Heart right ventricle (tissue), 16 donors: ENCODE measurements at regions of chr10 and their contacts with region 1.

Region 1: DNA sequence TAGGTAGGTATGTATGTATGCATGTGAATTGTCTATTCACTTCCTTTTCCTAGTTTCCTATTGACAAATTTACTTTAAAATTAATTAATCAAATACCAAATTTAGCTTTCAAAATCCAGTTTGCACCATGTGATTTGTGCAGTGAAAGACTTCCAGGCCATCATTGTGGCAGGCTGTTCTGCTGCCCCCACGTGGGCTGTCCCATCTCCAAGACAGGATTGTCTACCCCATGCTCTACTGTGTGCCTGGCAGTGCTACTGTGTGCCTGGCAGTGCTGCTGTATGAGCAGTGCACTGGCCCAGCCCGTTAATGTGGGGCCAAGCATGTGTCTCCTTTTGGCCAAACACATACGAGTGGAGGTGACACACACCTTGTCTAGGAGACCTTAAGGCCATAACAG is 374.8 kb downstream of the GFRA1 start:
- DNase-seq: no peak
- ATAC-seq: no peak
- H3K4me3 ChIP-seq: no peak overlapping the region
- H3K27ac ChIP-seq: no peak overlapping the region
- H3K4me1 ChIP-seq: no peaks in the 10 kb centered on the region
- H3K27me3 ChIP-seq: no peaks in the 10 kb centered on the region
- CTCF ChIP-seq: no peak

Region 2: DNA sequence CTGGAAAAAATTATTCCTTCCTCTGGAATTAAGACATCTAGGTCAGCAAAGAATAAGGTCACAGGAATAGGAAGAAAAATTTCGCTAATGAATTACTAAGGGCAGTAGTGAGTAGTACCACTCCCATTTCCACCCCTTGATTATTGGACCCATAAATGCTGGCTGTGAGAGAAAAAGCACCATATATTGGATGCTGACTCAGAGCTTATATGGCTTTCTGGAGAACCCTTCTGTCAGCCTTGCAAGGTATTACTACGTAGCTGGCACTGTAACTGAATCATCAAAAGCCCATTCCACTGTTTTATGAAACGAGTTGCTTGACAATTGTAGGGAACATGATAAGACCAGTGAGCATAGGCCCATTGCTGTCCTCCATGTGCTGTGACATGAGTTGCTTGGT is 625.8 kb before region 1 on chr10:
- intact Hi-C with region 1: no loop called
- DNase-seq: no peak
- ATAC-seq: no peak
- H3K4me3 ChIP-seq: no peak overlapping the region
- H3K27ac ChIP-seq: no peak overlapping the region
- H3K4me1 ChIP-seq: no peaks in the 10 kb centered on the region
- H3K27me3 ChIP-seq: no peaks in the 10 kb centered on the region
- CTCF ChIP-seq: no peak

Region 3: DNA sequence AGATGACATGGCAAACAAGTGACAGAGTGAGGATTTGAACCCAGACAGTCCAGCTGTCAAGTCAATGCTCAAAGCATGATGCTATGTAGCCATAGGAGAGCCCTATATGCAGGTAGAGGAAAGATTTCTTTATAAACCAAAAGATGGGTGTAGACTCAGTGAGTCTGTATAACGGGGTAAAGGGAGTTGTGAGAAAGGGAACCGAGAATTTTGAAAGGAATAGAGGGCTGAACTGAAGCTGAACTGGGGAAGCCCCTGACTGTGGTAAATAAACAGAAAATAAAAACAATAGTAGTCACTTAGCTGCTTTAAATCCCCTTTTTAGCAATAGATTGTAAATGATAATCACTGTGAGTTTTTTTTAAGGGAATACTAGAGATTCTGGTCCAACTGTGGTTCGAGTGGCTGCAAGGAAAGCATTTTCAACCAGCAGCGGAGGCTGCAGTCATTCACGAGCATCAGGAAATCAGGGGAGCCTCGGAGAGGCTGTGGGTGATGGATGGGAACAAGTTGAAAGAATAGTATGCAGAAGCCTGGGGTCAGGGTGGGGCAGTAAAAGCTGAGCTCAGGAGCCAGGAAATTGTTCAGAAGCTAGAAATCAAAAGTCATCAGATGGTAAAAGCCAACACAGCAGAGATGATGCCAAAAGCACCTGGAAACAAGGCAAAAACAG is 18.7 kb before region 1 on chr10:
- intact Hi-C with region 1: loop called in 1 of 10 experiments (anchors 2 kb)
- DNase-seq: no peak
- ATAC-seq: no peak
- H3K4me3 ChIP-seq: no peak overlapping the region
- H3K27ac ChIP-seq: no peak overlapping the region
- H3K4me1 ChIP-seq: no peaks in the 10 kb centered on the region
- H3K27me3 ChIP-seq: no peaks in the 10 kb centered on the region
- CTCF ChIP-seq: no peak

Region 4: DNA sequence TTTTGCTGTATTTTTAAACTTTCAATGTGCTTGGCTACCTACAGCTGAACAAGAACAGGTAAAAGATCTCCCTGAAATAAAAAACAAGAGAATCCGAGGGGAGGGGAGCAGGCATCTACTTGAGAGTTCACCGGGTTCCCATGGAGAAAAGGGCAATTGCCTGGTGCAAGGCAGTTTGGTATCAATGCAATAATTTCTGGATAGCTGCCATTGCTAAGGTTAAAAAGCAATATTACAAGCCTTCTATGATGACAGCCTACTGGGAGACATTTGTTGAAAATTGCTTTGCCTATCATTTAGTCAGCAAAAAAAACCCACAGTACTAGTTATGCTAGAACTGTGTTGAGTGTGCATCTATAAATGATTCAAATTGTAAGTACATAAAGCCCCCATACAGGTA is 292.6 kb after region 1 on chr10:
- intact Hi-C with region 1: no loop called
- DNase-seq: no peak
- ATAC-seq: no peak
- H3K4me3 ChIP-seq: no peak overlapping the region
- H3K27ac ChIP-seq: no peak overlapping the region
- H3K4me1 ChIP-seq: no peaks in the 10 kb centered on the region
- H3K27me3 ChIP-seq: no peaks in the 10 kb centered on the region
- CTCF ChIP-seq: no peak